ENCODE measurements at regions of chr2 and their contacts with region 1.

Region 1: DNA sequence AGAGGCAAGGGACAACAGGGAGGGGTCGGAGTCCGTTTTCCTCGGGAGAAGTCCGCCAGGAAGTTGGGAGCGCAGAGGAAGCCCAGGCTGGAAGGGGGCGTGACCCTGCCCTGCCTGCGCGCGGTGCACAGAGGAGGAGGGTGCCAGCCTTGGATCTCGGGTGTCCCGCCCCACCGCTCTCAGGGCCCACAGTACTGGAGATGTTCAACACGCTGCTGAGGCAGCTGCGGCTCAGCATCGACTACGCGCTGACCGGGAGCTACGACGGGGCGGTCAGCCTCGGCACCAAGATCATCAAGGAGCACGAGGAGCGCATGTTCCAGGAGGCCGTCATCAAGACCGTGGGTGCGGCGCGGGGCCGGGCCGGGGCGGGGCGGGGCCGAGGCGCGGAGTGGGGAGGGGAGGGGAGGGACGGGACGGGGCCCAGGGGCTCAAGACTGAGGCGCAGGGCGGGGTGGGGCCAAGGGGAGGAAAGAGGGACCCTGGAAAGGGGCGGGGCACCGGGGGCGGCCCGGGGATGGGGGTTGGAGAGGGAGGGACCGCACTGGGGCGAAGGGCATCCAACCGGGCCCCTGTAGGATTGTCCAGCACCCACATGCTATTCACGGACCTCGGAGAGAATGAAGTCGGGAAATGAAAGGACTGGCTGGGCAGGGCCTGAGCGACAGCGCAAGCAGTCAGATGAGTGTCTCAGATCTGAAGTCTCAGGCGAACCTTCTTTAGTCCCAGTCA is 36.6 kb downstream of the POMC start:
- DNase-seq: no peak
- H3K4me3 ChIP-seq: peak overlapping the region in 2 of 3 experiments; percentile 11 to 14
- H3K27ac ChIP-seq: no peak overlapping the region
- H3K4me1 ChIP-seq: peaks cover 5% of the 10 kb centered on the region
- H3K27me3 ChIP-seq: peaks cover 15% of the 10 kb centered on the region
- CTCF ChIP-seq: no peak

Region 2: DNA sequence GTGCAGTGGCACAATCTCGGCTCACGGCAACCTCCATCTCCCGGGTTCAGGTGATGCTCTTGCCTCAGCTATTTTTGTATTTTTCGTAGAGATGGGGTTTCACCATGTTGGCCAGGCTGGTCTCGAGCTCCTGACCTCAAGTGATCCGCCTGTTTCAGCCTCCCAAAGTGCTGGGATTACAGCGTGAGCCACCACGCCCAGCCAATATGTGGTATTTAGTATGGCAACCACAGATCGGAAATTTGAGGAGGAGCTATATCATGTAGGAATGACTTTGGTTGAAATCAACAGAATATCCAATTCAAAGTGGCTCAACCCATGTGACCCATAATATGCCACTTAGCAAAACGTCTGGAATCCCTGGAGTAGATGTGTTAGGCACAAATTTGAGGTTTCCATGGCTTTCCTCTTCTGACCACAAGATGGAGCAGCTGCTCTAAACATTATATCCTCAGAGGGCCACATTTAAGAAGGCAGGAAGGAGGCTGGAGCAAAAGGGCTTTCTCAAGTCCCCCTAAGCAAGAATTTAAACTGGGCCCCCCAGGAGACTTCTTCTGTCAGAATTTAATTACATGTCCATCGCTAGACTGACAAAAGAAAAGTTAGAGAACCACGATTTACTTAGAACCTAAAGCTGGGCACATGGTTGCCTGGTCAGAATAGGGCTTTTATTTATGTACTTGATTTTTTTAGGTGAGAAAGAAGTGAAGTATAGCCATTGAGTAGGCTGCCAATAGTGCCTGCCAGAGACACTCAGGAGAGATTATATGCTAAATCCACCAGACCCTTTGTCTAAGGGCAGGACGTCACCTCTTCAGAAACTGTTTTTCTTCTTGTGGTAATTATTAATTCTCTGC is 721.8 kb before region 1 on chr2:
- CTCF ChIA-PET with region 1: no interaction called
- dilution Hi-C with region 1: no loop called
- in situ Hi-C with region 1: loop called (anchors 10 to 25 kb)
- intact Hi-C with region 1: loop called (anchors 1 kb)
- DNase-seq: peak; percentile 49
- H3K4me3 ChIP-seq: no peak overlapping the region
- H3K27ac ChIP-seq: no peak overlapping the region
- H3K4me1 ChIP-seq: peaks cover 1% of the 10 kb centered on the region
- H3K27me3 ChIP-seq: no peaks in the 10 kb centered on the region
- CTCF ChIP-seq: peak; percentile 81 to 84

Region 3: GRCh38 chr2:24827321-24828237 is 304.2 kb before region 1 on chr2:
- CTCF ChIA-PET with region 1: no interaction called
- dilution Hi-C with region 1: no loop called
- in situ Hi-C with region 1: no loop called
- intact Hi-C with region 1: loop called (anchors 5 kb)
- DNase-seq: peak; percentile 54
- H3K4me3 ChIP-seq: no peak overlapping the region
- H3K27ac ChIP-seq: no peak overlapping the region
- H3K4me1 ChIP-seq: no peaks in the 10 kb centered on the region
- H3K27me3 ChIP-seq: no peaks in the 10 kb centered on the region
- CTCF ChIP-seq: peak; percentile 88 to 90

Region 4: DNA sequence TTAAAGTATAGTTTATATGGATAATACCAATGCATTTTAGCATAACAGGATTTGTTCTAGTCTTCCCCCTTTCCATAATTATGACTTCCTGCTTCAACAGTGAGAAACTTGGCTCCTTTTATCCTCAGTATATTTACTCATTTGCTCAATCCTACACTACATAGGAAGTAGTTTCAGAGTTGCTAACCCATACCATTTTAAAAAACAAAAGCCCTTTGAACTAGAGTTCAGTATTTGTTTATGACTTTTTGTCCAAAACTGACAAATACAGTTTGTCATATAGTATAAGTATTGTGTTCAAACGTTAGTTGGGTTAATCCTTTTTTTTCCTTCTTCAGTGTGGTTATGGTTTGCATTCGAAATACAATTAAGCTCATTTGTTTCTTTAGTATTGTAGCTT is 154.1 kb before region 1 on chr2:
- CTCF ChIA-PET with region 1: interaction called, 13 read pairs
- dilution Hi-C with region 1: no loop called
- in situ Hi-C with region 1: loop called in 1 of 2 experiments (anchors 5 kb)
- intact Hi-C with region 1: loop called (anchors 1 kb)
- DNase-seq: no peak
- H3K4me3 ChIP-seq: no peak overlapping the region
- H3K27ac ChIP-seq: no peak overlapping the region
- H3K4me1 ChIP-seq: no peaks in the 10 kb centered on the region
- H3K27me3 ChIP-seq: no peaks in the 10 kb centered on the region
- CTCF ChIP-seq: no peak

Region 5: GRCh38 chr2:25054720-25055119 is 77.0 kb before region 1 on chr2:
- CTCF ChIA-PET with region 1: interaction called, 11 read pairs
- dilution Hi-C with region 1: no loop called
- in situ Hi-C with region 1: no loop called
- intact Hi-C with region 1: no loop called
- DNase-seq: no peak
- H3K4me3 ChIP-seq: no peak overlapping the region
- H3K27ac ChIP-seq: no peak overlapping the region
- H3K4me1 ChIP-seq: no peaks in the 10 kb centered on the region
- H3K27me3 ChIP-seq: peaks cover 12% of the 10 kb centered on the region
- CTCF ChIP-seq: no peak

Measured in mammary epithelial cell (primary cell).